ENCODE measurements at regions of chr9 and their contacts with region 1.

Region 1: GRCh38 chr9:77177161-77177893 is at the start of gene VPS13A:
- DNase-seq: peak; percentile 78 to 92 (median 87)
- ATAC-seq: peak; percentile 92
- H3K4me3 ChIP-seq: peak within 1 kb of the TSS; percentile 89
- H3K4me3 Mint-ChIP-seq: peak within 1 kb of the TSS; percentile 90 to 98 (median 96)
- H3K27ac ChIP-seq: peak within 1 kb of the TSS; percentile 86
- H3K27ac Mint-ChIP-seq: peak within 1 kb of the TSS; percentile 76 to 96 (median 90)
- H3K4me1 ChIP-seq: peaks cover 5 to 17% of the 10 kb centered on the region in 2 donors
- H3K4me1 Mint-ChIP-seq: peaks cover 12 to 39% (median 30%) of the 10 kb centered on the region in 7 donors
- H3K27me3 ChIP-seq: no peaks in the 10 kb centered on the region
- H3K27me3 Mint-ChIP-seq: peaks cover 0 to 20% (median 0%) of the 10 kb centered on the region in 5 donors
- total RNA-seq, gene VPS13A: 37.1 to 52.8 (median 42.6) TPM

Region 2: DNA sequence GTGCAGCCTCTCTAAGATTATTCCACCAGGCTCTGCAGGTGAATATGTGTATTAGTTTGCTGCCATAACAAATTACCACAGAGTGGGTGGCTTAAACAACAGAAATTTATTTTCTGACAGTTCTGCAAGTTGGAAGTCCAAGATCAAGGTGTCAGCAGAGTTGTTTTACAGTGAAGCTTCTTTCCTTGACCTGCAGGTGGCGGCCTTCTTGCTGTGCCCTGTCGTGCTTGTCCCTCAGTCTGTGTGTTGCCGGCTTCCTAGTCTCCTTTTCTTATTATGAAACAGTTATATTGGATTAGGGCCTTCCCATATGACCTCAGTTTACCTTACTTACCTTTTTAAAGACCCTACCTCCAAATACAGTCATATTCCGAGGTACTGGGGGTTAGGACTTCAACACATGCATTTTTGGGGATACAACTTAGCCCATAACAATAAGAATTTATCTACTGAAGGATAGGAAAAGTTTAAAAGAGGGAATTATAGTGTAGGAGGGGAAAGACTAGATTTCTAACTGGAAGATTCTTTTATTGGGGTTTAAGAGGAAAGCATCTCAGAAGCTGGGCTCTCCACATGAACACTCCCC is 1991.6 kb before region 1 on chr9:
- CTCF ChIA-PET with region 1: no interaction called
- POLR2A ChIA-PET with region 1: no interaction called
- intact Hi-C with region 1: loop called in 1 of 2 experiments (anchors 10 kb)
- DNase-seq: peak in 7 of 9 donors; percentile 10 to 38 (median 25)
- ATAC-seq: peak; percentile 74
- H3K4me3 ChIP-seq: no peak overlapping the region
- H3K4me3 Mint-ChIP-seq: peak overlapping the region in 3 of 10 donors; percentile 20 to 36 (median 25)
- H3K27ac ChIP-seq: no peak overlapping the region
- H3K27ac Mint-ChIP-seq: peak overlapping the region in 2 of 9 donors; percentile 30 to 81
- H3K4me1 ChIP-seq: peaks cover 12 to 13% of the 10 kb centered on the region in 2 donors
- H3K4me1 Mint-ChIP-seq: peaks cover 8 to 32% (median 28%) of the 10 kb centered on the region in 7 donors
- H3K27me3 ChIP-seq: no peaks in the 10 kb centered on the region
- H3K27me3 Mint-ChIP-seq: no peaks in the 10 kb centered on the region

Region 3: GRCh38 chr9:76458903-76459690 is 718.2 kb before region 1 on chr9 and contains the start of gene GCNT1:
- CTCF ChIA-PET with region 1: no interaction called
- POLR2A ChIA-PET with region 1: no interaction called
- intact Hi-C with region 1: loop called in 1 of 2 experiments (anchors 1 kb)
- DNase-seq: peak; percentile 78 to 98 (median 86)
- ATAC-seq: peak; percentile 98
- H3K4me3 ChIP-seq: peak within 1 kb of the TSS; percentile 92
- H3K4me3 Mint-ChIP-seq: peak within 1 kb of the TSS; percentile 81 to 96 (median 92)
- H3K27ac ChIP-seq: no peak within 1 kb of the TSS
- H3K27ac Mint-ChIP-seq: peak within 1 kb of the TSS in 8 of 9 donors; percentile 7 to 81 (median 61)
- H3K4me1 ChIP-seq: peaks cover 3 to 11% of the 10 kb centered on the region in 2 donors
- H3K4me1 Mint-ChIP-seq: peaks cover 16 to 34% (median 20%) of the 10 kb centered on the region in 7 donors
- H3K27me3 ChIP-seq: no peaks in the 10 kb centered on the region
- H3K27me3 Mint-ChIP-seq: peaks cover 0 to 3% (median 0%) of the 10 kb centered on the region in 5 donors
- total RNA-seq, gene GCNT1: 1.4 to 8.9 (median 1.7) TPM

Region 4: GRCh38 chr9:77163884-77164283 is 13.4 kb before region 1 on chr9:
- CTCF ChIA-PET with region 1: no interaction called
- POLR2A ChIA-PET with region 1: no interaction called
- intact Hi-C with region 1: loop called in 1 of 2 experiments (anchors 1 kb)
- DNase-seq: no peak
- ATAC-seq: no peak
- H3K4me3 ChIP-seq: no peak overlapping the region
- H3K4me3 Mint-ChIP-seq: no peak overlapping the region
- H3K27ac ChIP-seq: no peak overlapping the region
- H3K27ac Mint-ChIP-seq: no peak overlapping the region
- H3K4me1 ChIP-seq: no peaks in the 10 kb centered on the region
- H3K4me1 Mint-ChIP-seq: no peaks in the 10 kb centered on the region
- H3K27me3 ChIP-seq: no peaks in the 10 kb centered on the region
- H3K27me3 Mint-ChIP-seq: peaks cover 0 to 30% (median 4%) of the 10 kb centered on the region in 5 donors

Region 5: DNA sequence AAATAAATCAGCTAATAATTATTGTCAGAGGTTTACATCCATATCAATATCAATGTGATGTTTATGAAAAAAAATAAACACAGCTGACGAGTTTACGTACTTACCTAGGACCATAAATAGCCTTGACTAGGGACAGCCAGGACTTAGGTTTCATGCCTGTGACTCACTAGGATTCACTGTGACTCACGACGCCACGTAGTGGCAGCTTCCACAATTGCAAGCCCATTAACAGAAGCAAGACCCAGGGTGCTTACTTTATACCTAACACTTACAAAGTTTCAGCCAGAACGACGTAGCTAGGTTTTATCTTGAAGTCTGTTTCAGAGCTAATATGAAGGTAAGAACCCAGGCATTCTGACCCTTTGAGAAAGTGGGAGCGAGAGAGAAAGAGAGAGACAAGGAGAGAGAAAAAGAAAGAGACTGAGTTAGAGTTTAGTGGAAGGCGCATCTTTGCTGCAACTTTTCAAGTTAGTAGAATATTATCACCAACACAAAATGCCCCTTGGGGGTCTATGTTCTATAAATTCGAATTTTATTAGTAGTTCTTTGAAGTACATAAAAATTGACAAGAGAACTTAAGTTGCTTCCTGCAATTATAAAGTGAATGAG is 279.6 kb after region 1 on chr9:
- CTCF ChIA-PET with region 1: no interaction called
- POLR2A ChIA-PET with region 1: interaction called, 3 read pairs
- intact Hi-C with region 1: loop called in 1 of 2 experiments (anchors 5 kb)
- DNase-seq: peak; percentile 43 to 77 (median 68)
- ATAC-seq: peak; percentile 83
- H3K4me3 ChIP-seq: no peak overlapping the region
- H3K4me3 Mint-ChIP-seq: no peak overlapping the region
- H3K27ac ChIP-seq: no peak overlapping the region
- H3K27ac Mint-ChIP-seq: no peak overlapping the region
- H3K4me1 ChIP-seq: no peaks in the 10 kb centered on the region
- H3K4me1 Mint-ChIP-seq: peaks cover 9 to 30% (median 24%) of the 10 kb centered on the region in 7 donors
- H3K27me3 ChIP-seq: no peaks in the 10 kb centered on the region
- H3K27me3 Mint-ChIP-seq: no peaks in the 10 kb centered on the region

Region 6: DNA sequence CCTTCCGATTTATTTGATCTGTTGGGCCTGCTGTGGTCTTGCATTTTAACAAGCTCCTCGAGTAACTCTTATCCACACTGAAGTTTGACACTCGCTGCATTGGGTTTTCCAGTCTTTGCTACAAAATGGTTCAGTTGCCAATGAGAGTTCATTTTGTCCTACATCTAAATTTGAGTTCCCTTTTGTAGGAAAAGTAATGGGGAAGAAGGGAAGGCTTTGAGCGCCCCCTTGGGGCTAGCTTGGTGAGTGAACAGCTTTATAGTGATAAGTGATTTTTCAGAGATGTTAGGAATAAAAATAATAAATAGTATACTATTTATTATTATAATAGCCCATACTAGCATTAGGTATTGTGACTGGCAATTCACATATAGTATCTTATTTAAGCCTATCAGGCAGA is 944.2 kb after region 1 on chr9:
- CTCF ChIA-PET with region 1: no interaction called
- POLR2A ChIA-PET with region 1: no interaction called
- intact Hi-C with region 1: loop called in 1 of 2 experiments (anchors 1 kb)
- DNase-seq: peak in 7 of 9 donors; percentile 24 to 55 (median 37)
- ATAC-seq: peak; percentile 44
- H3K4me3 ChIP-seq: no peak overlapping the region
- H3K4me3 Mint-ChIP-seq: no peak overlapping the region
- H3K27ac ChIP-seq: no peak overlapping the region
- H3K27ac Mint-ChIP-seq: peak overlapping the region in 3 of 9 donors; percentile 44 to 94 (median 59)
- H3K4me1 ChIP-seq: peaks cover 17 to 32% of the 10 kb centered on the region in 2 donors
- H3K4me1 Mint-ChIP-seq: peaks cover 27 to 55% (median 47%) of the 10 kb centered on the region in 7 donors
- H3K27me3 ChIP-seq: no peaks in the 10 kb centered on the region
- H3K27me3 Mint-ChIP-seq: peaks cover 0 to 15% (median 0%) of the 10 kb centered on the region in 5 donors

Region 7: DNA sequence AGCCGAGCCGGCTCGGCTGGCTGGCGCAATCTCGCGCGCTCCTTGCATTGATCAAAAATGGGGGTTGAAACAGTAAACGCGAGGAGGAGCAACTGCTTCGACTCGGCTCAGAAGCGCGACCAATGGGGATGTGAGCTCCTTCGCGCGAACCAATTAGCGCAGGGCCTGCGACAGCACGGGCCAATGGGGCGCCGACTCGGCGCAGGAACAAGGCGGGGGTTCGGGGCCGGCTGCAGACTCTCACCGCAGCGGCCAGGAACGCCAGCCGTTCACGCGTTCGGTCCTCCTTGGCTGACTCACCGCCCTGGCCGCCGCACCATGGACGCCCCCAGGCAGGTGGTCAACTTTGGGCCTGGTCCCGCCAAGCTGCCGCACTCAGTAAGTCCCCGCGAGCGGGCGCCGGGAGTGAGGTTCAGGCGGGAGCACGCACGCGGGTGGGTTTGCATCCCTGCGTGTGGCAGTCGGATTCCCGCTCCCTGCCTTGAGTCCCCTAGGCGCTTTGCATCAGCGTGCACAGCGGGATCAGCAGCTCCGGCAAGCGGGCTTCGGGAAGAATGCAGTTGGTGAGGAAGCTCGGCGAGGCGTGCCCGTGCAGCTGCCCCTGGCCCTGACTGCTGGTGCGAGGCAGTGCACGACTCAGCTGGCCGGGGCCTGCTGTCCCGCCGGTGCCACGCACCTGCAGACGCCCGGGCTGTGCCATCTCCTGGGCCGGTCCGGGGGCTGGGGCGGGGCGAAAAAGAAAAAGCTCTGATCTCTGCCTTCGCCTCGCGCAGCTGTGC is 1119.8 kb after region 1 on chr9 and contains the start of gene PSAT1:
- CTCF ChIA-PET with region 1: no interaction called
- POLR2A ChIA-PET with region 1: interaction called, 4 read pairs
- intact Hi-C with region 1: loop called (anchors 2 to 5 kb)
- DNase-seq: peak; percentile 69 to 91 (median 88)
- ATAC-seq: peak; percentile 99
- H3K4me3 ChIP-seq: peak within 1 kb of the TSS; percentile 86
- H3K4me3 Mint-ChIP-seq: peak within 1 kb of the TSS; percentile 86 to 95 (median 92)
- H3K27ac ChIP-seq: peak within 1 kb of the TSS; percentile 56
- H3K27ac Mint-ChIP-seq: peak within 1 kb of the TSS; percentile 60 to 95 (median 81)
- H3K4me1 ChIP-seq: peaks cover 4 to 8% of the 10 kb centered on the region in 2 donors
- H3K4me1 Mint-ChIP-seq: peaks cover 21 to 59% (median 44%) of the 10 kb centered on the region in 7 donors
- H3K27me3 ChIP-seq: no peaks in the 10 kb centered on the region
- H3K27me3 Mint-ChIP-seq: peaks cover 0 to 5% (median 0%) of the 10 kb centered on the region in 5 donors
- total RNA-seq, gene PSAT1: 1.6 to 65.2 (median 9.5) TPM